Vagina (tissue), 2 donors: ENCODE measurements at regions of chr4 and their contacts with region 1.

Region 1: DNA sequence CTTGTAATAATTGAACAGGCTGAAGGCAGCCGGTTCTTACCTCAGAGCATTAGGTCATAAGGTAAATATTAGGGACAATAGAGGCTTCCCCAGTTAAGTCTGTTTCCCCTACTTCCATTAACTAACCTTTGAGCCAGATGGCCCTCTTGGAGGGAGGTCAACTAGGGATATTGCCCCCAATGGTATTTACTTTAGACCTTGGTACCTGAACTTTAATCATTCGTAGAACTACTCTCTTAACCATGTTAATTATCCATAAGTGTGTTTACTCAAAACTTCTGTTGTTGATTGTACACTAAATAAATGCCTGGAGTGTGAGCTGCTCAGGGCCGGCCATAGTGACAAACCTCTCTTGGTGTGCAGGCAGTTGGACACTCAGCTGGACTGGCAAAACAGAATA is 1843.5 kb upstream of the AGA start:
- DNase-seq: no peak
- H3K4me3 ChIP-seq: no peak overlapping the region
- H3K27ac ChIP-seq: no peak overlapping the region
- H3K4me1 ChIP-seq: no peaks in the 10 kb centered on the region
- H3K27me3 ChIP-seq: no peaks in the 10 kb centered on the region
- CTCF ChIP-seq: no peak
- POLR2A ChIP-seq: no peak

Region 2: DNA sequence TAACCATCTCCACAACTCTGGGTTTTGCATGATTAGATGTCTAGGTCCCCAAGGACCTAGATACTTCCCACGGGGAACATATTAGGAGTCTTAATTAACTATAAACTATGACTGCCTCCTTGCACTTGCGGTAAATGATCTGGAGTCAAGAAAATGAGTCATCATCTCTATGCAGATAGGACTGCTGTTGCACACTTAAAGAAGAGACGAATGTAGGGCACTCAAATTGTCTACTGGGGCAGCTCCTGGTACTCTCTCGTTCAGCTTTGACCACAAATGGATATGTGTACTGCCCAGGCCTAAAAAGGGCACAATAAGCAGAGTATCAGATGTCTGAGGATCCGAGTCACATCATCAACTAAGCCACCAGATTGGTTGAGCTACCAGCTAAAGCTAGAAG is 60.1 kb before region 1 on chr4:
- intact Hi-C with region 1: no loop called
- DNase-seq: no peak
- H3K4me3 ChIP-seq: no peak overlapping the region
- H3K27ac ChIP-seq: no peak overlapping the region
- H3K4me1 ChIP-seq: no peaks in the 10 kb centered on the region
- H3K27me3 ChIP-seq: no peaks in the 10 kb centered on the region
- CTCF ChIP-seq: no peak
- POLR2A ChIP-seq: no peak

Region 3: GRCh38 chr4:179268791-179269190 is 16.9 kb before region 1 on chr4:
- intact Hi-C with region 1: loop called (anchors 1 kb)
- DNase-seq: no peak
- H3K4me3 ChIP-seq: no peak overlapping the region
- H3K27ac ChIP-seq: no peak overlapping the region
- H3K4me1 ChIP-seq: no peaks in the 10 kb centered on the region
- H3K27me3 ChIP-seq: no peaks in the 10 kb centered on the region
- CTCF ChIP-seq: no peak
- POLR2A ChIP-seq: no peak

Region 4: GRCh38 chr4:180850318-180850940 is 1564.7 kb after region 1 on chr4:
- intact Hi-C with region 1: no loop called
- DNase-seq: no peak
- H3K4me3 ChIP-seq: no peak overlapping the region
- H3K27ac ChIP-seq: no peak overlapping the region
- H3K4me1 ChIP-seq: no peaks in the 10 kb centered on the region
- H3K27me3 ChIP-seq: no peaks in the 10 kb centered on the region
- CTCF ChIP-seq: no peak
- POLR2A ChIP-seq: no peak